ENCODE measurements at regions of chr6 and their contacts with region 1.

Region 1: DNA sequence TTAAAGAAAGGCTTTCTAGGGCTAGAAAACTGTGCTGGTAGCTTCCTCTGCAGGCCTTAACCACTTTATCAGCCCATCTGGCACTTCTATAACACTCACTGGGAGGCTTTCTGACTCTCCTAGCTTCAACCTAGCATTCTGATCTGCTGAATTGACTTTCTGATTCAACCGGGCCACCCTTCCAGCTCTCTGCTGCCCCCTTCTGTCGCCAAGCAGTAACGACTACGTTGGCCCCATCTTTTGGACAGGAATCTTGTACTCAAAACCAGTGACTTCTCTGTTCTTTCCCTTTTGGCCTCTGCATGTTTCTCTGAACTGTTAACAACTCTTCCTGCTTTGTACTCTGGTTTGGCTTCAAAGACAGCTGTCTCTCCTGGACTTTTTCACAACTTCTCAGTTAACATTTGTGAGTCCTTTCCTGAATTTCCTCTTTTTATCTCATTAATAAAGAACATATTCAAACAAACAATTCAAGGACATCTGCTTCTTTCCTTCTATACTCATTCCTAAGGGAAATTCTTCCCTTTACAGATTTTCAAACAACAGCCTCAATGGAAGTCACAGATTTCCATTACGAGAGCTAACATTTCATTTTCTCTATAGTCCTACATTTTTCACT is 43.9 kb upstream of the FAM135A start:
- DNase-seq: peak; percentile 7 to 36
- ATAC-seq: peak; percentile 42 to 65
- H3K4me3 ChIP-seq: no peak overlapping the region
- H3K27ac ChIP-seq: no peak overlapping the region
- H3K4me1 ChIP-seq: no peaks in the 10 kb centered on the region
- H3K27me3 ChIP-seq: no peaks in the 10 kb centered on the region
- CTCF ChIP-seq: peak; percentile 38 to 87 (median 64)
- POLR2A ChIP-seq: no peak

Region 2: GRCh38 chr6:70079241-70079640 is 290.2 kb before region 1 on chr6:
- in situ Hi-C with region 1: no loop called
- intact Hi-C with region 1: no loop called
- DNase-seq: no peak
- ATAC-seq: no peak
- H3K4me3 ChIP-seq: no peak overlapping the region
- H3K27ac ChIP-seq: no peak overlapping the region
- H3K4me1 ChIP-seq: no peaks in the 10 kb centered on the region
- H3K27me3 ChIP-seq: no peaks in the 10 kb centered on the region
- CTCF ChIP-seq: no peak
- POLR2A ChIP-seq: no peak

Region 3: DNA sequence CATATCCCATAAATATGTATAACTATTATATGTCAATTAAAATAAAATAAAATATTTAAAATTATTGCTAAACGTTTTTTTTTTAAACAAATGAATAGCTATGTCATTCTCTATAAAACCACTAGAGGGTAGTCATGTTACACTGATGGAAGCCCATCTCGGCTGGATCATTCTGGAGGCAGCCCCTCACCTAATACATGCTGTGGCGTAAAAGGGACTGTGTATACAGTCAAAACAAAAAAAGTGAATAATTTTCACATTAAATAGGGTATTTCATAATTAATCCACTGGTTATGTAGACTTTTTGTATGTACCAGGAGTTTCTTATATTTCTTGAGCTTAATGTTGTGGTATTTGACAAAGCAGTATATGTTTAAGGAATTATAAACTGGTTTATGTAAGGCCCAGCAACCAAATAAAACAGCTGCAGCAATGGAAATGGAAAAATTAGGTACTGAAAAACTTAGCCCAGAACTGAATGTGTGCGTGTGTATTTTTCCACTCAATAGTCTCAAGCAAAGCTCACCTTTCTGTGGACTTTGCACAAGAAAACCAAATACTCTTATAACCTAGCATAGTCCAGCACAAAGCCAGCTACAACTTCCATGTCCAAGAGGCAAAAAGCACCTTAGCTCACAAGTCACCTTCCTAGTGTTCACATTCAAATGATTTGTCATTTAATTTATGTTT is 148.3 kb before region 1 on chr6:
- in situ Hi-C with region 1: no loop called
- intact Hi-C with region 1: loop called (anchors 1 kb)
- DNase-seq: no peak
- ATAC-seq: no peak
- H3K4me3 ChIP-seq: no peak overlapping the region
- H3K27ac ChIP-seq: no peak overlapping the region
- H3K4me1 ChIP-seq: no peaks in the 10 kb centered on the region
- H3K27me3 ChIP-seq: no peaks in the 10 kb centered on the region
- CTCF ChIP-seq: peak in 4 of 5 experiments; percentile 16 to 75 (median 59)
- POLR2A ChIP-seq: no peak

Region 4: GRCh38 chr6:70310063-70310694 is 59.3 kb before region 1 on chr6:
- in situ Hi-C with region 1: no loop called
- intact Hi-C with region 1: loop called (anchors 5 kb)
- DNase-seq: no peak
- ATAC-seq: no peak
- H3K4me3 ChIP-seq: no peak overlapping the region
- H3K27ac ChIP-seq: no peak overlapping the region
- H3K4me1 ChIP-seq: peaks cover 0 to 2% of the 10 kb centered on the region in 2 donors
- H3K27me3 ChIP-seq: no peaks in the 10 kb centered on the region
- CTCF ChIP-seq: peak in 3 of 5 experiments; percentile 24 to 53 (median 48)
- POLR2A ChIP-seq: no peak

Region 5: GRCh38 chr6:70325009-70325408 is 44.4 kb before region 1 on chr6:
- in situ Hi-C with region 1: no loop called
- intact Hi-C with region 1: loop called (anchors 2 kb)
- DNase-seq: no peak
- ATAC-seq: no peak
- H3K4me3 ChIP-seq: no peak overlapping the region
- H3K27ac ChIP-seq: no peak overlapping the region
- H3K4me1 ChIP-seq: no peaks in the 10 kb centered on the region
- H3K27me3 ChIP-seq: no peaks in the 10 kb centered on the region
- CTCF ChIP-seq: no peak
- POLR2A ChIP-seq: no peak

Region 6: GRCh38 chr6:70423189-70424134 is 54.0 kb after region 1 on chr6:
- in situ Hi-C with region 1: no loop called
- intact Hi-C with region 1: no loop called
- DNase-seq: no peak
- ATAC-seq: no peak
- H3K4me3 ChIP-seq: no peak overlapping the region
- H3K27ac ChIP-seq: no peak overlapping the region
- H3K4me1 ChIP-seq: peaks cover 0 to 5% of the 10 kb centered on the region in 2 donors
- H3K27me3 ChIP-seq: no peaks in the 10 kb centered on the region
- CTCF ChIP-seq: no peak
- POLR2A ChIP-seq: no peak

Region 7: GRCh38 chr6:70667711-70668498 is 298.5 kb after region 1 on chr6 and contains the start of gene SMAP1:
- in situ Hi-C with region 1: no loop called
- intact Hi-C with region 1: no loop called
- DNase-seq: peak; percentile 91 to 95
- ATAC-seq: peak; percentile 70 to 77
- H3K4me3 ChIP-seq: peak within 1 kb of the TSS; percentile 77 to 95 (median 94)
- H3K27ac ChIP-seq: peak within 1 kb of the TSS; percentile 91 to 99 (median 97)
- H3K4me1 ChIP-seq: peaks cover 47 to 64% of the 10 kb centered on the region in 2 donors
- H3K27me3 ChIP-seq: no peaks in the 10 kb centered on the region
- CTCF ChIP-seq: peak in 1 of 5 experiments; percentile 13
- POLR2A ChIP-seq: peak; percentile 87 to 95
- total RNA-seq, gene SMAP1: 29.4 to 36.6 (median 35.8) TPM